Kidney (tissue), 22 donors: ENCODE measurements at regions of chr15 and their contacts with region 1.

Region 1: GRCh38 chr15:45399381-45400212 is 21.3 kb upstream of the GATM start:
- DNase-seq: peak in 2 of 5 donors; percentile 72 to 77
- H3K4me3 ChIP-seq: no peak overlapping the region
- H3K27ac ChIP-seq: no peak overlapping the region
- H3K4me1 ChIP-seq: peaks cover 0 to 10% (median 5%) of the 10 kb centered on the region in 3 donors
- H3K27me3 ChIP-seq: no peaks in the 10 kb centered on the region
- CTCF ChIP-seq: peak; percentile 65

Region 2: DNA sequence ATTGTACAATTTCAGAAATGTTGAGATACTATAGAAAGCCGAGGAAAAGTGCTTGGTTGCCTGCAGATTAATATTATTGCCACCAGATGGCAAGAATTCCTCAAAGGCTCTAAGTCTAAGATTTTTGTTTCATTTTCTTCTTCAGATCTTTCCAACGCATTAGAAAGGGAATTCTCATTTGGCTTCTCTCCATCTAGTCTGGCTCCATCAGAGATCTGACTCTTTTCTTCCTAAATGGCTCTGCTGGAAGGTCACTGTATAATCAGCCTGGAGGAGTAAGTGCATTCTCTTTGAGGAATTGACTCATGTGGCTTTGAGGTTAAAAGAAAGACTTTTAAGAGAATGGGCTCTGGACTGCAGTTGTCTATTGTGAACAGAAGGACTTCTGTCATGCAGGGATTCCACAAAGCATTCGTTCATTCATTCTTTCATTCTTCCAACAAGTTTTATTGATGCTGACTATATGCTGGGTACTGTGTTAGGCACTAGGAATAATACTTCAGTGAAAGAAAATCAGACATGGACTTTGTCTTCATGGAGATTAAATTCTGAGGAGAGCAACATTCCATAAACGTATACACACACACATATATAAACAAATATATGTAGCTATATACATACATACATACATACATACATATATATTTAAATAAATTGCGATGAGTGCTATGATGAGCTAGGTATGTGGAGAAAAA is 92.2 kb before region 1 on chr15:
- intact Hi-C with region 1: loop called (anchors 10 kb)
- DNase-seq: peak in 2 of 5 donors; percentile 32 to 62
- H3K4me3 ChIP-seq: peak overlapping the region in 2 of 3 donors; percentile 53 to 57
- H3K27ac ChIP-seq: no peak overlapping the region
- H3K4me1 ChIP-seq: peaks cover 0 to 3% (median 0%) of the 10 kb centered on the region in 3 donors
- H3K27me3 ChIP-seq: no peaks in the 10 kb centered on the region
- CTCF ChIP-seq: peak; percentile 52